Heart right ventricle (tissue), 16 donors: ENCODE measurements at regions of chr1 and their contacts with region 1.

Region 1: GRCh38 chr1:162977944-162978568 is 91.1 kb upstream of the RGS4 start:
- DNase-seq: no peak
- ATAC-seq: no peak
- H3K4me3 ChIP-seq: no peak overlapping the region
- H3K27ac ChIP-seq: no peak overlapping the region
- H3K4me1 ChIP-seq: no peaks in the 10 kb centered on the region
- H3K27me3 ChIP-seq: no peaks in the 10 kb centered on the region
- CTCF ChIP-seq: no peak

Region 2: GRCh38 chr1:162756523-162756922 is 221.5 kb before region 1 on chr1:
- intact Hi-C with region 1: no loop called
- DNase-seq: no peak
- ATAC-seq: peak in 1 of 8 donors; percentile 23
- H3K4me3 ChIP-seq: no peak overlapping the region
- H3K27ac ChIP-seq: no peak overlapping the region
- H3K4me1 ChIP-seq: no peaks in the 10 kb centered on the region
- H3K27me3 ChIP-seq: no peaks in the 10 kb centered on the region
- CTCF ChIP-seq: peak in 1 of 9 donors; percentile 14

Region 3: GRCh38 chr1:162927421-162927820 is 50.6 kb before region 1 on chr1:
- intact Hi-C with region 1: loop called in 1 of 10 experiments (anchors 5 kb)
- DNase-seq: no peak
- ATAC-seq: no peak
- H3K4me3 ChIP-seq: no peak overlapping the region
- H3K27ac ChIP-seq: no peak overlapping the region
- H3K4me1 ChIP-seq: peaks cover 0 to 9% (median 0%) of the 10 kb centered on the region in 9 donors
- H3K27me3 ChIP-seq: peaks cover 0 to 11% (median 0%) of the 10 kb centered on the region in 7 donors
- CTCF ChIP-seq: no peak

Region 4: GRCh38 chr1:163054181-163054591 is 76.1 kb after region 1 on chr1:
- intact Hi-C with region 1: no loop called
- DNase-seq: no peak
- ATAC-seq: no peak
- H3K4me3 ChIP-seq: no peak overlapping the region
- H3K27ac ChIP-seq: no peak overlapping the region
- H3K4me1 ChIP-seq: peaks cover 0 to 7% (median 0%) of the 10 kb centered on the region in 9 donors
- H3K27me3 ChIP-seq: no peaks in the 10 kb centered on the region
- CTCF ChIP-seq: no peak